T-cell (primary cell): ENCODE measurements at regions of chr16 and their contacts with region 1.

Region 1: GRCh38 chr16:71711789-71712188 is 12.7 kb downstream of the PHLPP2 start:
- DNase-seq: no peak
- ATAC-seq: no peak
- H3K4me3 ChIP-seq: no peak overlapping the region
- H3K4me3 Mint-ChIP-seq: no peak overlapping the region
- H3K27ac ChIP-seq: no peak overlapping the region
- H3K27ac Mint-ChIP-seq: no peak overlapping the region
- H3K4me1 ChIP-seq: no peaks in the 10 kb centered on the region
- H3K4me1 Mint-ChIP-seq: peaks cover 0 to 8% (median 0%) of the 10 kb centered on the region in 3 donors
- H3K27me3 ChIP-seq: no peaks in the 10 kb centered on the region
- H3K27me3 Mint-ChIP-seq: no peaks in the 10 kb centered on the region

Region 2: GRCh38 chr16:71572497-71573116 is 139.2 kb before region 1 on chr16:
- CTCF ChIA-PET with region 1: interaction called in 1 of 2 experiments, 10 read pairs
- POLR2A ChIA-PET with region 1: no interaction called
- DNase-seq: no peak
- ATAC-seq: no peak
- H3K4me3 ChIP-seq: no peak overlapping the region
- H3K4me3 Mint-ChIP-seq: no peak overlapping the region
- H3K27ac ChIP-seq: no peak overlapping the region
- H3K27ac Mint-ChIP-seq: no peak overlapping the region
- H3K4me1 ChIP-seq: no peaks in the 10 kb centered on the region
- H3K4me1 Mint-ChIP-seq: no peaks in the 10 kb centered on the region
- H3K27me3 ChIP-seq: peaks cover 6 to 11% of the 10 kb centered on the region in 2 experiments
- H3K27me3 Mint-ChIP-seq: peaks cover 7 to 18% of the 10 kb centered on the region in 2 donors

Region 3: DNA sequence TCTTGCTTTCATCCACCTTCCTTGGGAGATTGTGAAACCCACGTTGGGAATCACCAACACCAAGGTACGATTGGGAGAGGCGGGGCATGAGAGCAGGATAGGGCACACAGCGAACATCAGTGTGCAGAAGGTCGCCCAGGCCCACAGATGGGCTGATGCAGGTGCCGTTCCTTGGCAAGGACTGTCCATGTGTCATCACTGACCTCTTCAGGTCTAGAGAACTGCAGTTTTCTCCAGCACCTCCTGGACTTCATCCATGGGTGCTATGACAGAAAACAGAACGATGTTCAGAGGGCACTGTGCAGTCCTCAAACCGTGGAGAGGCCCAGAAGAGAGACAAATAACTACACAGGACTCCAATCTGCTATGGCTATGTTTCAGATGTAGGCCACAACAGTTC is 111.0 kb before region 1 on chr16:
- CTCF ChIA-PET with region 1: no interaction called
- POLR2A ChIA-PET with region 1: no interaction called
- DNase-seq: no peak
- ATAC-seq: no peak
- H3K4me3 ChIP-seq: no peak overlapping the region
- H3K4me3 Mint-ChIP-seq: no peak overlapping the region
- H3K27ac ChIP-seq: no peak overlapping the region
- H3K27ac Mint-ChIP-seq: no peak overlapping the region
- H3K4me1 ChIP-seq: no peaks in the 10 kb centered on the region
- H3K4me1 Mint-ChIP-seq: no peaks in the 10 kb centered on the region
- H3K27me3 ChIP-seq: peaks cover 0 to 7% of the 10 kb centered on the region in 2 experiments
- H3K27me3 Mint-ChIP-seq: peaks cover 7 to 16% of the 10 kb centered on the region in 2 donors